ENCODE measurements at regions of chr12 and their contacts with region 1.

Region 1: DNA sequence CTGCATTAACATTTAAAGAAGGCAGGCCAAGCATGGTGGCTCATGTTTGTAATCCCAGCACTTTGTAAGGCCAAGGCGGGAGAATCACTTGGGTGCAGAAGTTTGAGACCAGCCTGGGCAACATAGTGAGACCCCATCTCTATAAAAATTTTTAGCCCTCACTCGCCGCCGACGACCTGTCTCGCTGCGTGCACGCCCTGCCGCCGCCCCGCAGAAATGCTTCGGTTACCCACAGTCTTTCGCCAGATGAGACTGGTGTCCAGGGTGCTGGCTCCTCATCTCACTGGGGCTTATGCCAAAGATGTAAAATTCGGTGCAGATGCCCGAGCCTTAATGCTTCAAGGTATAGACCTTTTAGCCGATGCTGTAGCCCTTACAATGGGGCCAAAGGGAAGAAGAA is 10.8 kb upstream of the RBMS2 start:
- DNase-seq: no peak
- H3K4me3 ChIP-seq: no peak overlapping the region
- H3K27ac ChIP-seq: no peak overlapping the region
- H3K4me1 ChIP-seq: peaks cover 0 to 2% (median 0%) of the 10 kb centered on the region in 3 donors
- H3K27me3 ChIP-seq: no peaks in the 10 kb centered on the region
- CTCF ChIP-seq: no peak

Region 2: GRCh38 chr12:56565510-56566101 is 54.8 kb after region 1 on chr12:
- intact Hi-C with region 1: loop called (anchors 5 kb)
- DNase-seq: peak; percentile 85 to 98 (median 89)
- H3K4me3 ChIP-seq: peak overlapping the region in 1 of 3 donors; percentile 26
- H3K27ac ChIP-seq: peak overlapping the region; percentile 80
- H3K4me1 ChIP-seq: peaks cover 0 to 12% (median 2%) of the 10 kb centered on the region in 3 donors
- H3K27me3 ChIP-seq: no peaks in the 10 kb centered on the region
- CTCF ChIP-seq: peak; percentile 17

Measured in kidney (tissue), 22 donors.